ENCODE measurements at regions of chr12 and their contacts with region 1.

Region 1: GRCh38 chr12:9049520-9050133 is 60.3 kb downstream of the KLRG1 start:
- DNase-seq: peak; percentile 22 to 58 (median 26)
- ATAC-seq: peak; percentile 71
- H3K4me3 ChIP-seq: no peak overlapping the region
- H3K27ac ChIP-seq: no peak overlapping the region
- H3K4me1 ChIP-seq: peaks cover 0 to 5% of the 10 kb centered on the region in 2 experiments; a peak in 1 of 5 replicates
- H3K27me3 ChIP-seq: peaks cover 0 to 2% of the 10 kb centered on the region in 2 experiments; a peak in 1 of 5 replicates
- CTCF ChIP-seq: peak in 2 of 3 experiments; percentile 17 to 53; a peak in 4 of 6 replicates
- EP300 ChIP-seq: no peak
- POLR2A ChIP-seq: no peak
- RAD21 ChIP-seq: peak; percentile 56 to 73

Region 2: GRCh38 chr12:8658346-8658745 is 391.3 kb before region 1 on chr12:
- CTCF ChIA-PET with region 1: interaction called, 11 read pairs
- POLR2A ChIA-PET with region 1: no interaction called
- in situ Hi-C with region 1: no loop called
- intact Hi-C with region 1: loop called (anchors 5 kb)
- DNase-seq: no peak
- ATAC-seq: no peak
- H3K4me3 ChIP-seq: no peak overlapping the region
- H3K27ac ChIP-seq: no peak overlapping the region
- H3K4me1 ChIP-seq: no peaks in the 10 kb centered on the region
- H3K27me3 ChIP-seq: peaks cover 6 to 10% of the 10 kb centered on the region in 2 experiments; a peak in 4 of 5 replicates
- CTCF ChIP-seq: no peak
- EP300 ChIP-seq: no peak
- POLR2A ChIP-seq: no peak
- RAD21 ChIP-seq: no peak

Region 3: GRCh38 chr12:8681041-8681902 is 368.4 kb before region 1 on chr12:
- CTCF ChIA-PET with region 1: interaction called, 4 read pairs
- POLR2A ChIA-PET with region 1: no interaction called
- in situ Hi-C with region 1: loop called (anchors 5 kb)
- intact Hi-C with region 1: loop called (anchors 1 kb)
- DNase-seq: no peak
- ATAC-seq: no peak
- H3K4me3 ChIP-seq: no peak overlapping the region
- H3K27ac ChIP-seq: no peak overlapping the region
- H3K4me1 ChIP-seq: no peaks in the 10 kb centered on the region; a peak in 2 of 5 replicates
- H3K27me3 ChIP-seq: no peaks in the 10 kb centered on the region; a peak in 2 of 5 replicates
- CTCF ChIP-seq: no peak
- EP300 ChIP-seq: no peak
- POLR2A ChIP-seq: no peak
- RAD21 ChIP-seq: no peak

Region 4: GRCh38 chr12:8780389-8780788 is 269.2 kb before region 1 on chr12:
- CTCF ChIA-PET with region 1: no interaction called
- POLR2A ChIA-PET with region 1: no interaction called
- in situ Hi-C with region 1: no loop called
- intact Hi-C with region 1: loop called (anchors 10 kb)
- DNase-seq: peak; percentile 12 to 47 (median 22)
- ATAC-seq: peak; percentile 81
- H3K4me3 ChIP-seq: no peak overlapping the region
- H3K27ac ChIP-seq: no peak overlapping the region
- H3K4me1 ChIP-seq: peaks cover 0 to 3% of the 10 kb centered on the region in 2 experiments; a peak in 3 of 5 replicates
- H3K27me3 ChIP-seq: no peaks in the 10 kb centered on the region
- CTCF ChIP-seq: peak in 2 of 3 experiments; percentile 27 to 61; a peak in 2 of 6 replicates
- EP300 ChIP-seq: no peak
- POLR2A ChIP-seq: no peak
- RAD21 ChIP-seq: peak; percentile 57 to 58

Region 5: GRCh38 chr12:8823565-8824300 is 225.9 kb before region 1 on chr12:
- CTCF ChIA-PET with region 1: no interaction called
- POLR2A ChIA-PET with region 1: no interaction called
- in situ Hi-C with region 1: no loop called
- intact Hi-C with region 1: loop called (anchors 10 kb)
- DNase-seq: peak; percentile 24 to 68 (median 48)
- ATAC-seq: peak; percentile 88
- H3K4me3 ChIP-seq: no peak overlapping the region
- H3K27ac ChIP-seq: no peak overlapping the region
- H3K4me1 ChIP-seq: peaks cover 10 to 15% of the 10 kb centered on the region in 2 experiments; a peak in 4 of 5 replicates
- H3K27me3 ChIP-seq: no peaks in the 10 kb centered on the region
- CTCF ChIP-seq: peak; percentile 79 to 81 (median 79)
- EP300 ChIP-seq: no peak
- POLR2A ChIP-seq: no peak
- RAD21 ChIP-seq: peak; percentile 66 to 87

Region 6: GRCh38 chr12:8890313-8891085 is 159.1 kb before region 1 on chr12:
- CTCF ChIA-PET with region 1: no interaction called
- POLR2A ChIA-PET with region 1: no interaction called
- in situ Hi-C with region 1: no loop called
- intact Hi-C with region 1: loop called (anchors 10 kb)
- DNase-seq: peak; percentile 58 to 74 (median 66)
- ATAC-seq: peak; percentile 82
- H3K4me3 ChIP-seq: peak overlapping the region; percentile 41
- H3K27ac ChIP-seq: peak overlapping the region; percentile 55; the same call in 1 of the 3 replicates
- H3K4me1 ChIP-seq: peaks cover 11 to 18% of the 10 kb centered on the region in 2 experiments; a peak in 4 of 5 replicates
- H3K27me3 ChIP-seq: no peaks in the 10 kb centered on the region
- CTCF ChIP-seq: peak; percentile 59 to 79 (median 73)
- EP300 ChIP-seq: no peak
- POLR2A ChIP-seq: no peak
- RAD21 ChIP-seq: peak; percentile 75 to 81

Region 7: DNA sequence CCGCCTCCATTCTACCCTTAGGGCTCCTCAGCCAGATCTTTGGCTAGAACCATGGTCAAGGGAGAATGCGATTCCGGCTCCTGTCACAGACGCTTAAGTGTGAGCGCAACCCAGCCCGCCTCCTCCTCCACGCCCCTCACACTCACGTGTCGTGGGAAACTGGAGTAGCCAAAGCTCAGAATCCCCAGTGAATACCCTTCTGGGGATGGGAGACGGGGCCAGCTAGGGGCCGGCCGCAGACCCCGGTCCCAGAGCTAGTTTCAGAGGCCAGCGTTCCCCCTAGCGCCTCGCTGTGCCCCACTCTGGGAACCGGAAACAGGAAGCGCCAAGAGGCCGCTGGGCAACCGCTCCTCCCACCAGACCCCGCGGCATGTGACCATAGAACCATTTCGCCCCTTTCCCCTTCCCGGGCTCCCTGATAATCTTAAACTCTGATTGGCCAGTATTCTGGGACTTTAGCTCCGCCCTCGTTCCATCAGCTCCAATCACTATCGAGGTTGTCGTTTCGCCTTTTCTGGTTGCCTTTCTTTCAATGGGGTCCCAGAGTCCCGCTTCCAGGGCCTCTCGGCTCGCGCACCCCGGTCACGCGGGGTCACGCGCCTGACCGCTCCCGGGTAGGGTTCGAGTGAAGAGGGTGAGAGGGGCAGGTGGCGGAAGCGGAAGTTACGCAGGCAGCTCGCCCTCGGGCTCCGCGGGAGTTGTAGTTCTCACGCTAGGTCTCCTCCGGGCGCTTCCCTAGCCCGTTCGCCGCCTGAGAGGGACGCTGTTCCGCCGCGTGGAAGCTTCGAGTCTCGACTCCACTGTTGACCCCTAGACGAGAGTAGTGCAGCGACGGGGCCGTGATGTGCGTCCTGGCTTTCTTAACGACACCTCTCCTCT is 100.0 kb before region 1 on chr12 and contains the start of gene M6PR:
- CTCF ChIA-PET with region 1: interaction called, 14 read pairs
- POLR2A ChIA-PET with region 1: no interaction called
- in situ Hi-C with region 1: no loop called
- intact Hi-C with region 1: no loop called
- DNase-seq: peak; percentile 89 to 94 (median 92)
- ATAC-seq: peak; percentile 93
- H3K4me3 ChIP-seq: peak within 1 kb of the TSS; percentile 96
- H3K27ac ChIP-seq: peak within 1 kb of the TSS; percentile 96
- H3K4me1 ChIP-seq: peaks cover 0 to 8% of the 10 kb centered on the region in 2 experiments; a peak in 2 of 5 replicates
- H3K27me3 ChIP-seq: no peaks in the 10 kb centered on the region
- CTCF ChIP-seq: peak; percentile 65 to 76 (median 72)
- EP300 ChIP-seq: 0 out of 2 replicates have a peak, but pooled peaks have one; percentile 7
- POLR2A ChIP-seq: peak; percentile 88
- RAD21 ChIP-seq: peak; percentile 53 to 67; a peak in 3 of 4 replicates
- polyA plus RNA-seq, gene M6PR: 86.8 to 133 TPM

Region 8: DNA sequence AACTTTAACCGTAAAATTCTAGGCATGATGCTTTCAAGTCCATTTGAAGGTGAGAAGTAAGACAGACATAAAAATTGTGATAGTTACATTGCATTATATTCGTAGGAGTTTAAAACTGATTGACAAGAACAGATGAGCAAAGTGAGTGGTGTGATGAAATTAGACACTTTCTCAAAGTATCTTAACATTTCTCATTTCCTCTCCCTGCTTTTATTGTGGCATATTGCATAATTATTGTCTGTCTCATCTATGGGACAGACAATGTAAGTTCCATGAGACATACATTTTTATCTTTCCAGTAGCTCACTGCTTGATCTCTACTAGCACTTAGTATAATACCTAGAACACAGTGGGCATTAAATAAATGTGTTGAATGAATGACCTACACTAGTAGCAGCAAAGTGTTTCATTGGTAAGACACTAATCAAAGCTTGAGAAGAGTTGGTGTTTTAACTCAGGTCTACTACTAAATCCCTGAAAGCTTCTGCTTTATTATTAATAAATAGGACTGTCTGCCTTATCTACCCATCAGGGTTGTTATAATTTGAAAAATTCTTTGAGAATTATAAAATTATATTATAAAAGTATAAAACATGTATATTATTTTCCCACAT is 47.0 kb after region 1 on chr12:
- CTCF ChIA-PET with region 1: no interaction called
- POLR2A ChIA-PET with region 1: no interaction called
- in situ Hi-C with region 1: no loop called
- intact Hi-C with region 1: no loop called
- DNase-seq: no peak
- ATAC-seq: no peak
- H3K4me3 ChIP-seq: no peak overlapping the region
- H3K27ac ChIP-seq: no peak overlapping the region
- H3K4me1 ChIP-seq: no peaks in the 10 kb centered on the region
- H3K27me3 ChIP-seq: peaks cover 0 to 11% of the 10 kb centered on the region in 2 experiments; a peak in 1 of 5 replicates
- CTCF ChIP-seq: no peak
- EP300 ChIP-seq: no peak
- POLR2A ChIP-seq: no peak
- RAD21 ChIP-seq: no peak

Region 9: GRCh38 chr12:9144730-9145106 is 95.1 kb after region 1 on chr12:
- CTCF ChIA-PET with region 1: no interaction called
- POLR2A ChIA-PET with region 1: no interaction called
- in situ Hi-C with region 1: no loop called
- intact Hi-C with region 1: no loop called
- DNase-seq: no peak
- ATAC-seq: no peak
- H3K4me3 ChIP-seq: no peak overlapping the region
- H3K27ac ChIP-seq: no peak overlapping the region
- H3K4me1 ChIP-seq: no peaks in the 10 kb centered on the region
- H3K27me3 ChIP-seq: no peaks in the 10 kb centered on the region
- CTCF ChIP-seq: no peak
- EP300 ChIP-seq: no peak
- POLR2A ChIP-seq: no peak
- RAD21 ChIP-seq: no peak

Region 10: GRCh38 chr12:9244894-9245293 is 195.3 kb after region 1 on chr12:
- CTCF ChIA-PET with region 1: no interaction called
- POLR2A ChIA-PET with region 1: no interaction called
- in situ Hi-C with region 1: no loop called
- intact Hi-C with region 1: no loop called
- DNase-seq: no peak
- ATAC-seq: no peak
- H3K4me3 ChIP-seq: no peak overlapping the region
- H3K27ac ChIP-seq: no peak overlapping the region
- H3K4me1 ChIP-seq: no peaks in the 10 kb centered on the region
- H3K27me3 ChIP-seq: peaks cover 5 to 12% of the 10 kb centered on the region in 2 experiments
- CTCF ChIP-seq: no peak
- EP300 ChIP-seq: no peak
- POLR2A ChIP-seq: no peak
- RAD21 ChIP-seq: no peak

Region 11: DNA sequence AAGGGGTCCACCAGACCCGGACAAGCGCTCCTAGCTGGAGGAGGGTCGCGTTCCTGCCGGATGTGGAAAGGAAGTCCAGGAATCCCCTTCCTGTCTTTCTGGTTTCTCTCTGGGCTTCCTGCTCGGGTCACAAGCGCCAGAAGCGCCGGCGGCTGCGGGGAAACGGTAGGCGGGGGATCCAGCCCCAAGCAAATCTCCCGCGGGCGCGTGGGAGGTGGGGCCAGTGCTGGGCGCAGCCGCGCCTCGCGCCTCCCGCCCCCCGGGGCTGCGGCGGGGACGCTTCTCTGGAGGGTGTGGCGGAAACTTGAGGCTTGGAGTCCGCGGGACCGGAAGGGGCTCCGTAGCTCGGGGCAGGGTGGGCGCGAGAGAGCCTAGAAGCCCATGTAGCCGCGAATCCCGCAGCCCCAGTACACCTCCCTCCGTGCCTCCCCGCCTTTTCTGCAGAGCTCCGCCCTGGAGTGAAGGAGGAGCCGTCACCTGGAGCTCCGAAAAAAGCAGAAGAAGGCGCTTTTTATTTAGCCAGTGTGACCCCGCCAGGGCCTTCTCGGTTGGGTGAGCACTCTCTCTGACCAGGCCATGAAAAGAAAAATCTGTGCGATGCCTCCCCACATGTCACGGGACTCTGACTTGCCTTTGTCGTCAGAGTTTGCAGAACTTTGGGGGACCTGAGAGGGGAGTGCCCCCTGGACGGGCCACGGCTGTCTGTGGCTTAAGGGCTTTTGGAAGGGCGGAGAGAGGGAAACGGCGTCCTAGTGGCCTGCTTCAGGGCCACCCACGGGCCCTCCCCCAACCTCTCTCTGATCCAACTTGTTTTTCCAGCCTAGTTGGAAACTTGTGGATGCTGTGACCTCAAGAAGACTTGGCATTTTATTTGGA is 598.4 kb after region 1 on chr12:
- CTCF ChIA-PET with region 1: no interaction called
- POLR2A ChIA-PET with region 1: no interaction called
- in situ Hi-C with region 1: no loop called
- intact Hi-C with region 1: no loop called
- DNase-seq: peak; percentile 86 to 91 (median 88)
- ATAC-seq: peak; percentile 90
- H3K4me3 ChIP-seq: peak overlapping the region; percentile 57
- H3K27ac ChIP-seq: peak overlapping the region; percentile 92
- H3K4me1 ChIP-seq: peaks cover 0 to 5% of the 10 kb centered on the region in 2 experiments; a peak in 3 of 5 replicates
- H3K27me3 ChIP-seq: no peaks in the 10 kb centered on the region
- CTCF ChIP-seq: no peak
- EP300 ChIP-seq: peak; percentile 12
- POLR2A ChIP-seq: peak; percentile 72
- RAD21 ChIP-seq: no peak

Measured in K562 (cell line).